Panc1 (cell line): ENCODE measurements at regions of chr3 and their contacts with region 1.

Region 1: GRCh38 chr3:49277383-49277775 is 347 bp upstream of the C3orf62 start:
- DNase-seq: no peak
- ATAC-seq: peak; percentile 44; the same call in 1 of the 2 replicates
- H3K4me3 ChIP-seq: peak overlapping the region; percentile 41 to 51
- H3K27ac ChIP-seq: peak overlapping the region; percentile 83
- H3K4me1 ChIP-seq: peaks cover 7% of the 10 kb centered on the region
- H3K27me3 ChIP-seq: no peaks in the 10 kb centered on the region
- CTCF ChIP-seq: no peak

Region 2: DNA sequence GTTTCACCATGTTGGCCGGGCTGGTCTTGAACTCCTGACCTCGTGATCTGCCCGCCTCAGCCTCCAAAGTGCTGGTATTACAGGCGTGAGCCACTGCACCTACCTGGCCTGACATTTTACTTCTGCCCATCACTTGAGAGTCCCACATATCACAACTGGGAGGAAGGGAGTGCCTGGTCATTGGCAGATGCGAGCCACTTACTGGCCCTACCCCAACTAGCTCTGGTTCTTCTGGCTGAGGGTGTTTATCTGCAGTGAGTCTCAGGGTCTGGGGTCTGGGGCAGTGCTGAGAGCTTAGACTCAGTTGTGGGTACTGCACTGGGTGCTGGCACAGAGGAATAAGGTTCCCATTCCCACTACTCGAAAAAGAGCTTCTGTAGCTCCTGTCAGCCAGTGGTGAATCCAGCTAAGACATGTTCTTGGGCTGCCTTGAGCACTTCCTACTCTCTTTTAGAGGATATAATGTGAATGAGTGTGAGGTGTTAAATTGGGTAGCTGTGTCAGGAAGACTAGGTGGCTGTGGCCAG is 222.9 kb after region 1 on chr3:
- CTCF ChIA-PET with region 1: no interaction called
- POLR2A ChIA-PET with region 1: interaction called, 11 read pairs
- in situ Hi-C with region 1: no loop called
- intact Hi-C with region 1: no loop called
- DNase-seq: no peak
- ATAC-seq: peak; percentile 26; the same call in 1 of the 2 replicates
- H3K4me3 ChIP-seq: no peak overlapping the region
- H3K27ac ChIP-seq: no peak overlapping the region
- H3K4me1 ChIP-seq: no peaks in the 10 kb centered on the region
- H3K27me3 ChIP-seq: no peaks in the 10 kb centered on the region
- CTCF ChIP-seq: no peak